Esophagus squamous epithelium (tissue), 5 donors: ENCODE measurements at regions of chr7 and their contacts with region 1.

Region 1: DNA sequence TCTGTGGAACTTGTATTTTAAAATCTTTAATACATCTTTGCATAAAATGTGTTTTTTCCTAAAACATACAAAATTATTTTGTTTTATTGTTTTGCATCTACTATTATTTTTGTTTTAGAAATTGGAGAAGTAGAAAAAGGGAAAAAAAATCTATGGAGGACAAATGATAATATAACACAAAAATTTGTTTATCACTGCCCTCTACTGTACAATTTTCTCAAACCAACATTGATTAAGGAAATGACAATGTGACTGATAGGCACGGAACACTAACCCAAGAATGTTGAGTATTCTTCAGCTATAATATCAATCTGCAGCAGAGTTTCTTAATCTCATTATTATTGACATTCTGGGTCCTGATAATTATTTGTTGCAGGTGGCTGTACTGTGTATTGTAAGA is 9.5 kb upstream of the ING3 start:
- DNase-seq: no peak
- H3K4me3 ChIP-seq: no peak overlapping the region
- H3K27ac ChIP-seq: no peak overlapping the region
- H3K4me1 ChIP-seq: no peaks in the 10 kb centered on the region
- H3K27me3 ChIP-seq: no peaks in the 10 kb centered on the region
- CTCF ChIP-seq: peak in 2 of 6 experiments; percentile 26 to 35
- POLR2A ChIP-seq: no peak

Region 2: GRCh38 chr7:120805636-120806388 is 135.3 kb before region 1 on chr7:
- intact Hi-C with region 1: loop called (anchors 10 kb)
- DNase-seq: no peak
- H3K4me3 ChIP-seq: no peak overlapping the region
- H3K27ac ChIP-seq: no peak overlapping the region
- H3K4me1 ChIP-seq: no peaks in the 10 kb centered on the region
- H3K27me3 ChIP-seq: no peaks in the 10 kb centered on the region
- CTCF ChIP-seq: peak; percentile 68 to 82 (median 76)
- POLR2A ChIP-seq: no peak

Region 3: DNA sequence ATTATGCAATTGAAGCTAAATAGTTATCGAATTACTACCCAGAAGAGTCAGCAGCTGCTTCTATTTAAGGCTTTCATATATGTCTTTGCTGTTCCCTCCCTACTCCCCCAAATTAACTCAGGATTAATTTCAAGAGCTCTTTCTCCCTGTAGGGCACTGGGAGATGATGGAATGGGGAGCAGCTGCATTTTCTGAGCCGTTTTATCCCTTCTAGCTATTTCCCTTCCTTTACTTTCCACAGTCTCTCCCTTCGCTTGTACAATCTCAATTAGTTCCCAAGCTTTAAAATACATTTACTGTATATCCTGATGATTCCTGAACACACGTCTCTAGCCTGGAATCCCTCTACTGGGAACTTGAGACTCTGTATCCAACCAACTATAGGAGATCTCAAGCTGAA is 63.4 kb before region 1 on chr7:
- intact Hi-C with region 1: no loop called
- DNase-seq: no peak
- H3K4me3 ChIP-seq: no peak overlapping the region
- H3K27ac ChIP-seq: no peak overlapping the region
- H3K4me1 ChIP-seq: no peaks in the 10 kb centered on the region
- H3K27me3 ChIP-seq: no peaks in the 10 kb centered on the region
- CTCF ChIP-seq: no peak
- POLR2A ChIP-seq: no peak

Region 4: GRCh38 chr7:121006711-121007315 is 65.7 kb after region 1 on chr7:
- intact Hi-C with region 1: no loop called
- DNase-seq: no peak
- H3K4me3 ChIP-seq: no peak overlapping the region
- H3K27ac ChIP-seq: no peak overlapping the region
- H3K4me1 ChIP-seq: peaks cover 0 to 4% (median 0%) of the 10 kb centered on the region in 3 donors
- H3K27me3 ChIP-seq: peaks cover 0 to 5% (median 0%) of the 10 kb centered on the region in 4 donors
- CTCF ChIP-seq: no peak
- POLR2A ChIP-seq: no peak